ENCODE measurements at regions of chr5 and their contacts with region 1.

Region 1: GRCh38 chr5:139197710-139198669 is at the start of gene SIL1:
- DNase-seq: peak; percentile 84 to 98
- H3K4me3 ChIP-seq: peak within 1 kb of the TSS; percentile 63 to 79
- H3K27ac ChIP-seq: peak within 1 kb of the TSS; percentile 77 to 89
- H3K4me1 ChIP-seq: peaks cover 0 to 9% of the 10 kb centered on the region in 2 donors
- H3K27me3 ChIP-seq: no peaks in the 10 kb centered on the region
- CTCF ChIP-seq: no peak
- total RNA-seq, gene SIL1: 53.4 TPM

Region 2: DNA sequence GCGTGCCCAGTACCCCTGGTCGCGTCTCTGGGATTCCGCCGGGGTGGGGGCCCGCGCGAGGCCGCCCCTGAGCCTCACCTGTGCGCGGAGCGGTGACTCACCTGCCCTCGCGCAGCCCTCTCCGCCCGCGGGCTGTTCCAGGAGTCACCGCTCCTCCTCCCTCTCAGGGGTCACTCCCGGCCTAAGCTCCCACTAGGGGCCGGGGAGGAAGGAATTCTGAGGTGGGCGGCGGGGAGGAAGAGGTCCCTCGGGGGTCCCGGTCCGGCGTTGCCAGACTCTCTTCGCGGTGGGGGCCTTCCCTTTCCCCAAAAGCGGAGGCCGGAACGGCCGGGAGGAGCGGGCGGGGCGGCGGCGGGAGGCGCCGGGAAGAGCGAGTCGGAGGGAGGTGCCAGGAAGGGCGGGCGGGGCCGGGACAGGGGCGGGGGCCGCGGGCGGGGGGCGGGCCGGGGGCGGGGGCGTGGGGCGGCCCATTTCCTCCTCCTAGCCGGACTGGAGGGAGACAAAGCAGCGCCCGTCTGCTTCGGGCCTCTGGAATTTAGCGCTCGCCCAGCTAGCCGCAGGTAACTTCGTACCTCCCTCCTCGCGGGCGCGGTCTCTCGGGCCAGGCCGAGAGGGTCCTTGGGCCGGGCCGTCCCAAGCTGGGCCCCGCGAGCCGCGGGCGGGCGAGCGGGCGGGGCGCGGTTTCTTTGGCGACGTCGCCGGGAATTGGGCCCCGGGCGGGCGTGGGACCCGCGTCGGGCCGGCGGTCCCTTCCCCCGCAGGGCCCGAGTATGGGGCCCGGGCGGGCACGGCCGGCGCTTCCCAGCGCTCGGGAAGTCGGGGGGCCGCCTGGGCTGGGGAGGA is 444.8 kb before region 1 on chr5 and contains the start of gene CTNNA1:
- intact Hi-C with region 1: loop called (anchors 10 kb)
- DNase-seq: peak; percentile 13 to 86
- H3K4me3 ChIP-seq: peak within 1 kb of the TSS; percentile 93 to 98
- H3K27ac ChIP-seq: peak within 1 kb of the TSS; percentile 98 to 100
- H3K4me1 ChIP-seq: peaks cover 6 to 24% of the 10 kb centered on the region in 2 donors
- H3K27me3 ChIP-seq: no peaks in the 10 kb centered on the region
- CTCF ChIP-seq: no peak
- total RNA-seq, gene CTNNA1: 310 TPM

Region 3: GRCh38 chr5:139104577-139105276 is 93.3 kb before region 1 on chr5:
- intact Hi-C with region 1: loop called (anchors 1 kb)
- DNase-seq: peak; percentile 42 to 92
- H3K4me3 ChIP-seq: peak overlapping the region; percentile 3 to 23
- H3K27ac ChIP-seq: peak overlapping the region; percentile 90 to 92
- H3K4me1 ChIP-seq: peaks cover 0 to 39% of the 10 kb centered on the region in 2 donors
- H3K27me3 ChIP-seq: no peaks in the 10 kb centered on the region
- CTCF ChIP-seq: no peak

Region 4: GRCh38 chr5:139120521-139120920 is 77.5 kb before region 1 on chr5:
- intact Hi-C with region 1: loop called (anchors 5 kb)
- DNase-seq: peak in 1 of 2 donors; percentile 79
- H3K4me3 ChIP-seq: peak overlapping the region in 1 of 2 donors; percentile 53
- H3K27ac ChIP-seq: peak overlapping the region; percentile 35 to 83
- H3K4me1 ChIP-seq: peaks cover 22 to 61% of the 10 kb centered on the region in 2 donors
- H3K27me3 ChIP-seq: no peaks in the 10 kb centered on the region
- CTCF ChIP-seq: no peak

Region 5: DNA sequence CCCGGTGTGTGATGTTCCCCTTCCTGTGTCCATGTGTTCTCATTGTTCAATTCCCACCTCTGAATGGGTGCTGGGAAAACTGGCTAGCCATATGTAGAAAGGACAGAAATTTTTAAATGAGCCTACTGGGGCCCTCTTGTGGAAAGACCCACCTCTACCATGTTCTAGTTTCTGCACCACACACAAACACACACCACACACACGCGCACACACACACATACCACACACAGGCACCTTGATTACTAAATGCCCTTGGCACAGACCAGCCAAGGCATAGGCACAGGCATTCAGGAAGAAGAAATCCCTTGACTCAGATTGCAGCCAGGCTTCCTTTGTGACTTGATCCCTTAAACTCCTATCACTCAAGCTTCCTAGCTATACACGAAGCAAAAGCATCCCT is 60.3 kb before region 1 on chr5:
- intact Hi-C with region 1: loop called (anchors 2 kb)
- DNase-seq: no peak
- H3K4me3 ChIP-seq: no peak overlapping the region
- H3K27ac ChIP-seq: peak overlapping the region; percentile 69 to 74
- H3K4me1 ChIP-seq: peaks cover 16 to 52% of the 10 kb centered on the region in 2 donors
- H3K27me3 ChIP-seq: no peaks in the 10 kb centered on the region
- CTCF ChIP-seq: peak in 1 of 3 experiments; percentile 12

Region 6: GRCh38 chr5:139232147-139232724 is 34.2 kb after region 1 on chr5:
- intact Hi-C with region 1: no loop called
- DNase-seq: no peak
- H3K4me3 ChIP-seq: no peak overlapping the region
- H3K27ac ChIP-seq: no peak overlapping the region
- H3K4me1 ChIP-seq: no peaks in the 10 kb centered on the region
- H3K27me3 ChIP-seq: no peaks in the 10 kb centered on the region
- CTCF ChIP-seq: no peak

Region 7: DNA sequence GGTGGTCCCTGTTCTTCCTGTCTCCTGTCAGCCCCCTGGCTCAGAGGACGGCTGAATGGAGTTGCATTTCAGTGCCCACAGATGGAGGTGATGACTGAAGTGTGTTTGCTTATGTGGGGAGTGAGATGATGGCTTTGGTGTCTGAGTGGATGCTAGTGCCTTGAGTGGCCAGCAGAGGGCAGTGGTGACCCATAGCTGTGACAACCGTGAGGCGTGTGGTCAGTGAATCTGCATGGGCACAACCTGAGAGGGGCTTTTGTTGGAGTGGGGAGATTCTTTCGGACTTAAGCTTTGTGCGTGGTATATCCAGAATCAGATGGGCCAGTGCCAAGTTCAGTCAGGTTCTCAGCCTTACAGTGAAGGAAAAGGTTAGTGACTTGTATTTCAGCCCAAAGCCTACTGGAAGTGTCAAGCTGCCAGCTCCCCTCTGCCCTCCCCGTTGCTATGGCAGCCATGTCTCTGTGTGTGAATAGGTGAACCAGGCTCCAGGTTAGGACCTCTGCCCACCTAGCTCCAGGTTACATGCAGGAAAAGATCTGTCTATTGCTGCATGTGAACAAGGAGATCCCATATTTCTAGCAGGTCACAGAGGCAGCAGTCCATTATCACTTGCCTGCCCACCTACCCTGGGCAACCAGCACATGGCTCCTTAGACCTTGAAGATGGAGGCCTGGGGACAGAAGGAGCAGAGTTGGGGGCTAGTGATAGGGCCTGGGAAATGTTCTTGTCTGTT is 435.5 kb after region 1 on chr5:
- intact Hi-C with region 1: no loop called
- DNase-seq: no peak
- H3K4me3 ChIP-seq: no peak overlapping the region
- H3K27ac ChIP-seq: no peak overlapping the region
- H3K4me1 ChIP-seq: peaks cover 7 to 26% of the 10 kb centered on the region in 2 donors
- H3K27me3 ChIP-seq: no peaks in the 10 kb centered on the region
- CTCF ChIP-seq: peak; percentile 90 to 98 (median 98)

Measured in ascending aorta (tissue), 2 donors.